ENCODE measurements at regions of chr13 and their contacts with region 1.

Region 1: DNA sequence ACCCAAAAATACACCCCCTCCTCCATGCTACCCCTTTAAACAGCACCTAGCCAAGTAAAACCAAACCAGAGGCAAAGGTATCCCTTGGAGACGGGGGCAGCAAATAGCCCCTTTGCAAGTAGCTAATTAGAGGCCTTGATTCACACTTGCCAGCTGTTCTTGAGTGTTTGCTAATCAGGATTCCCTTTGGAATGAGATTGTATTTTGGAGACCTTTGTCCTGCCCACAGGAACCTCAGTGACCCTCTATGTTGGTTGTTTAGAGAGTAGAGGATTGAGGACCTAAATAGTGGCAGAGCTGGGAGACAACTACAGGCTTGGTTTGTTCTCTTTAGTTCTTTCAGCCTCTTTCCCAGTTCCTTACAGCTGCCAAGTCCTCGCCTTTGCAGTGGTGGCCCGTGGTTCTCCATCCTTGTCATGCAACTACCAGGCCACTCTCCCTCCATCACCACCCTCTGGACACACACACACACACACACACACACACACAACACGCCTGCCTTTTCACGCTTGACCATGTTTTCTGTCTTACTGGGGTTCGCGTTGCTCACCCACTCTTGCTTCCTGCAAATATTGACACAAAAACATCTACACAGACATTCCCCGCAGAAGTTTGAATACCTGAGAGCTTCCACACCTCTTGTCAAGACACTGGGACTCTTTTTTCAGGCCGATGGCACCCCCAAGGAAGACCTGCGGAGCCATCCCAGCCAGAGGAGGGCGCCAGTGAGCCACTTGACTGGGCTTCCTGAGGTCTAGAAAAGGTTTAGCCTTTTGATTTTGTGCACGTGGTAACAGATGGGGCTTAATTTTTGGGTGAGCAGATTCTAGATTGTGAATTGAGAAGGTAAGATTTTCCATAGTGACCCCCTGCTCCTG is 80.0 kb upstream of the GPR183 start:
- DNase-seq: peak; percentile 92
- H3K4me3 Mint-ChIP-seq: no peak overlapping the region
- H3K27ac Mint-ChIP-seq: peak overlapping the region; percentile 61
- H3K4me1 Mint-ChIP-seq: peaks cover 64% of the 10 kb centered on the region
- H3K27me3 Mint-ChIP-seq: no peaks in the 10 kb centered on the region

Region 2: GRCh38 chr13:99176309-99177276 is 210.6 kb before region 1 on chr13:
- CTCF ChIA-PET with region 1: interaction called, 11 read pairs
- POLR2A ChIA-PET with region 1: no interaction called
- intact Hi-C with region 1: no loop called
- DNase-seq: peak; percentile 84
- H3K4me3 Mint-ChIP-seq: peak overlapping the region; percentile 45
- H3K27ac Mint-ChIP-seq: no peak overlapping the region
- H3K4me1 Mint-ChIP-seq: peaks cover 25% of the 10 kb centered on the region
- H3K27me3 Mint-ChIP-seq: peaks cover 3% of the 10 kb centered on the region

Region 3: GRCh38 chr13:99366075-99366987 is 20.8 kb before region 1 on chr13:
- CTCF ChIA-PET with region 1: interaction called, 14 read pairs
- POLR2A ChIA-PET with region 1: interaction called, 11 read pairs
- intact Hi-C with region 1: no loop called
- DNase-seq: no peak
- H3K4me3 Mint-ChIP-seq: peak overlapping the region; percentile 13
- H3K27ac Mint-ChIP-seq: peak overlapping the region; percentile 15
- H3K4me1 Mint-ChIP-seq: peaks cover 87% of the 10 kb centered on the region
- H3K27me3 Mint-ChIP-seq: no peaks in the 10 kb centered on the region

Region 4: GRCh38 chr13:99399636-99399974 is 12.5 kb after region 1 on chr13:
- CTCF ChIA-PET with region 1: interaction called, 23 read pairs
- POLR2A ChIA-PET with region 1: no interaction called
- intact Hi-C with region 1: no loop called
- DNase-seq: no peak
- H3K4me3 Mint-ChIP-seq: peak overlapping the region; percentile 9
- H3K27ac Mint-ChIP-seq: peak overlapping the region; percentile 49
- H3K4me1 Mint-ChIP-seq: peaks cover 16% of the 10 kb centered on the region
- H3K27me3 Mint-ChIP-seq: no peaks in the 10 kb centered on the region

Region 5: DNA sequence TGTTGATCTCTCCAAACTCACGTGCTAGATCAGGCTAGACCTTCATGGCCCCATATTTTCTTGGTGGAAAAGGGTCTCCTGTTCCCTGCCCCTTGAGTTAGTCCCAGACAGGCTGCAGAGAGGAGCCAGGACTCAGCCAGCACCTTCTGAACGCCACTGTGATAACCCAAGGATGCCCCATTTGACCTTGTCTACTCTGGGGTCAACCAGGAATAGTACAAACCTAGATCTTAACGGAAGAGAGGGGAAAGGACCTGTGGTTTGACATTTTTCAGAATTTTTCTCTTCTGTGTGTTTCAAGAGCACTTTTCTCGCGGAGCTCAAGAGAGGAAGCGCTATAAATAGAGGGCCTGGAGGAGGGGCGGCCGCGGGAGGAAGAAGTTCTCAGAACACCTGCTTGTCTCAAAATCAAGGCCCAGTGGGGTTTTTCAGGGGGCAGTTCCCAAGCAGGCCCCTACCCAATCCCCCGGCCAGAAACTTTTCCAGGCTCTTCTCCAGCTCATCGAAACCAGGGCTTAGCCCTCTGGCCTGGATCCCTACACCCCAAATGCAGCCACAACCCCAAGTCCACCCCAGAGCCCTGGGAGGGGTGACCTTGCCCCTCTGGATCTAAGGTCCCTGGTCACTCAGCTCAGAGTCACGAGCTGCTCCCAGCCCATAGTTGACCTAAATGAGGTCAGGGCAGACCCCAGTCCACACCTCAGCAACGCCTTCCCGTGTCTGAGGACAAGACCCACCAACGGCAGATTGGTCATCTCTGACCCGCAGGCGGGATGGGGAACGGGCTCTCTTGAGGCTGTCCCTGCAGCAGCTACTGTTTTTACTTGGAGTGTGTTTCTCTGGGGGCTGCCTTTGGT is 38.6 kb after region 1 on chr13:
- CTCF ChIA-PET with region 1: interaction called, 27 read pairs
- POLR2A ChIA-PET with region 1: interaction called, 3 read pairs
- intact Hi-C with region 1: no loop called
- DNase-seq: peak; percentile 72
- H3K4me3 Mint-ChIP-seq: peak overlapping the region; percentile 56
- H3K27ac Mint-ChIP-seq: peak overlapping the region; percentile 85
- H3K4me1 Mint-ChIP-seq: peaks cover 56% of the 10 kb centered on the region
- H3K27me3 Mint-ChIP-seq: no peaks in the 10 kb centered on the region

Region 6: GRCh38 chr13:99955747-99956472 is 568.8 kb after region 1 on chr13:
- CTCF ChIA-PET with region 1: no interaction called
- POLR2A ChIA-PET with region 1: no interaction called
- intact Hi-C with region 1: no loop called
- DNase-seq: no peak
- H3K4me3 Mint-ChIP-seq: peak overlapping the region; percentile 46
- H3K27ac Mint-ChIP-seq: no peak overlapping the region
- H3K4me1 Mint-ChIP-seq: peaks cover 29% of the 10 kb centered on the region
- H3K27me3 Mint-ChIP-seq: peaks cover 78% of the 10 kb centered on the region

Measured in activated CD4-positive, alpha-beta memory T cell treated with anti-CD3 and anti-CD28 coated beads for 36 hours (primary cell).